ENCODE measurements at regions of chr2 and their contacts with region 1.

Region 1: GRCh38 chr2:118119761-118120400 is 31.6 kb downstream of the INSIG2 start:
- DNase-seq: no peak
- H3K4me3 Mint-ChIP-seq: no peak overlapping the region
- H3K27ac Mint-ChIP-seq: no peak overlapping the region
- H3K4me1 Mint-ChIP-seq: peaks cover 16% of the 10 kb centered on the region
- H3K27me3 Mint-ChIP-seq: no peaks in the 10 kb centered on the region

Region 2: DNA sequence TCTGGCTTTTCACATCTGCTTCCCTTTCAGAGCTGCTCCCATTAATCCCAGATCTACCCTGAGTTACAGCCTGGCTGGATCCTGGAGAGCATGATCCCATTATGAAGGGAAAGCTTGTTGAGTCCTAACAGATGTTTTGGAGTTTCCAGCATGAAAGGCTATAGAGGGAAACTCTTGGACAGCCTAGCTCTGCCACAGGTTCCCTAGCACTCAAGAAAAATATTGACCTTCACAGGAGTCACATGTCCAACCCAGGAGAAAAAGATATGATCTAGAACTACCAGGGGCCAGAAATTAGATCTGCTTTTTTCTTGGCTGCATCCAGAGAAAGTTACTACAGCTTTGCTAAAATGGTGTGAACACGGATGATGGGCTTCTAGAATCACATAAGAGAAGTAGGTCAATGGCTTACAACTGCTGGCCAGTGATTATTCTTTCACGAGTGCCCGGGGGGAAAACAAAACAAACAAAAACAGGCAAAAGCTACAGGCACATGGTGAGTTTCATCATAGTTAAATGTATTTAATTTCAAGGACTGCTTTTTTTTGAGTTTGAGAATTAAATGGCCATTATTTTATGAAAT is 121.9 kb before region 1 on chr2:
- intact Hi-C with region 1: no loop called
- DNase-seq: no peak
- H3K4me3 Mint-ChIP-seq: no peak overlapping the region
- H3K27ac Mint-ChIP-seq: no peak overlapping the region
- H3K4me1 Mint-ChIP-seq: no peaks in the 10 kb centered on the region
- H3K27me3 Mint-ChIP-seq: no peaks in the 10 kb centered on the region

Region 3: GRCh38 chr2:118103951-118104940 is 15.6 kb before region 1 on chr2:
- intact Hi-C with region 1: loop called (anchors 2 kb)
- DNase-seq: no peak
- H3K4me3 Mint-ChIP-seq: no peak overlapping the region
- H3K27ac Mint-ChIP-seq: peak overlapping the region; percentile 41
- H3K4me1 Mint-ChIP-seq: peaks cover 61% of the 10 kb centered on the region
- H3K27me3 Mint-ChIP-seq: no peaks in the 10 kb centered on the region

Region 4: GRCh38 chr2:118169359-118170007 is 49.6 kb after region 1 on chr2:
- intact Hi-C with region 1: no loop called
- DNase-seq: no peak
- H3K4me3 Mint-ChIP-seq: no peak overlapping the region
- H3K27ac Mint-ChIP-seq: no peak overlapping the region
- H3K4me1 Mint-ChIP-seq: no peaks in the 10 kb centered on the region
- H3K27me3 Mint-ChIP-seq: no peaks in the 10 kb centered on the region

Region 5: GRCh38 chr2:118255771-118256372 is 136.0 kb after region 1 on chr2:
- intact Hi-C with region 1: no loop called
- DNase-seq: no peak
- H3K4me3 Mint-ChIP-seq: no peak overlapping the region
- H3K27ac Mint-ChIP-seq: no peak overlapping the region
- H3K4me1 Mint-ChIP-seq: no peaks in the 10 kb centered on the region
- H3K27me3 Mint-ChIP-seq: peaks cover 17% of the 10 kb centered on the region

Measured in activated T-helper 1 cell treated with anti-CD3 and anti-CD28 coated beads, Interleukin-12 subunit alpha, Interleukin-12 subunit beta, Interleukin-2, Interleukin-4 antibody, amounts not matched to agents 30 ng/mL and 10 ng/mL and 1 ng/mL, durations not matched to agents 14 hours and 24 hours and 36 hours (primary cell).